Transverse colon (tissue), 4 donors: ENCODE measurements at regions of chr2 and their contacts with region 1.

Region 1: GRCh38 chr2:171703574-171704347 is 16.5 kb downstream of the DYNC1I2 start:
- DNase-seq: no peak
- H3K4me3 ChIP-seq: no peak overlapping the region
- H3K27ac ChIP-seq: peak overlapping the region in 1 of 4 donors; percentile 13
- H3K4me1 ChIP-seq: peaks cover 0 to 17% (median 3%) of the 10 kb centered on the region in 4 donors
- H3K27me3 ChIP-seq: no peaks in the 10 kb centered on the region
- CTCF ChIP-seq: peak; percentile 24 to 32 (median 31)
- EP300 ChIP-seq: no peak
- POLR2A ChIP-seq: no peak

Region 2: DNA sequence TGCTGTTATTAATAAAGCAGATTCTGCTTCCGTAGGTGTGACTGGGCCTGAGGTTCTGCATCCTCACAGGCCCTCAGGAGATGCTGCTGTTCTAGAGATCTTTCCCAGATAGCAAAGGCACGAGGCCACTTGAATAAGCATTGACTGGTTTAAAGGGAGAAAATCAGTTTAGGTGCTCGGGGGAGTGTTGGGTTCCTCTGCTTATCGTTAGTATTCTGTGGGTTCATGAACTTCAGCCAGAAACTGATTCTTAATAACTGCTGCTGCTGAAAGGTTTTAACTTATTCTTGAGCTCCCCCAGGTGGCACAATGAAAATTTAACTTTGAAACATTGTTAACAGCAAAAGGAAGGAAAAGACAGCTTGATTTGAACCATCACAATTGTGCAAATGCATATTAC is 780.5 kb after region 1 on chr2:
- in situ Hi-C with region 1: loop called in 1 of 4 experiments (anchors 25 kb)
- intact Hi-C with region 1: no loop called
- DNase-seq: no peak
- H3K4me3 ChIP-seq: no peak overlapping the region
- H3K27ac ChIP-seq: peak overlapping the region in 1 of 4 donors; percentile 18
- H3K4me1 ChIP-seq: no peaks in the 10 kb centered on the region
- H3K27me3 ChIP-seq: no peaks in the 10 kb centered on the region
- CTCF ChIP-seq: peak in 2 of 5 experiments; percentile 16 to 22
- EP300 ChIP-seq: no peak
- POLR2A ChIP-seq: no peak